ENCODE measurements at regions of chr12 and their contacts with region 1.

Region 1: DNA sequence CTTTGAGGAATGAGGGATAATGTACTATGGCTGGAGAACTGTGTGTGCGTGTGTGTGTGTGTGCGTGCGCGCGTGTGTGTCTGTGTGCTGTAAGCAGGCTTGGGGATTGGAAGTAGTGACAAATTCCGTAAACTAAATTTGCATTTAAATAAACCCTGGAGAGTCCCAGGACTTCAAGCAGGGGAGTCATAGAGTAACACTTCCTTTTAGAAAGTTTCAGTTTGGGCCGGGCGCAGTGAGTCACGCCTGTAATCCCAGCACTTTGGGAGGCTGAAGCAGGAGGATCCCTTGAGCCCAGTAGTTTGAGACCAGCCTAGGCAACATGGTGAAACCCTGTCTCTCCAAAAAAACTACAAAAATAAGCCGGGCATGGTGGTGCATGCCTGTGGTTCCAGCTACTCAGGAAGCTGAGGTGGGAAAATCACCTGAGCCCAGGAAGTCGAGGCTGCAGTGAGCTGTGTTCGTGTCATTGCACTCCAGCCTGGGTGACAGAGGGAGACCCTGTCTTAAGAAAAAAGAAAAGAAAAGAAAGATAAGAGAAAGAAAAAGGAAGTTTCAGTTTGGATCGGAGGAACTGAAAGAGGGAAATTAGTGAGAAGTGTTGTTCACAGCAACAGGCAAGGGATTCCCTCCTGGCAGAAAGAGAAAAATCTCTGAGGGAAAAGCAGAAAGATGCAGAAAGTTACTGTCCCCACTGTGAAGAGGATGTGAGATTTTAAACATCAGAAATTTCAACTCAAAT is 222.7 kb upstream of the SOX5 start:
- DNase-seq: no peak
- ATAC-seq: peak; percentile 10

Region 2: DNA sequence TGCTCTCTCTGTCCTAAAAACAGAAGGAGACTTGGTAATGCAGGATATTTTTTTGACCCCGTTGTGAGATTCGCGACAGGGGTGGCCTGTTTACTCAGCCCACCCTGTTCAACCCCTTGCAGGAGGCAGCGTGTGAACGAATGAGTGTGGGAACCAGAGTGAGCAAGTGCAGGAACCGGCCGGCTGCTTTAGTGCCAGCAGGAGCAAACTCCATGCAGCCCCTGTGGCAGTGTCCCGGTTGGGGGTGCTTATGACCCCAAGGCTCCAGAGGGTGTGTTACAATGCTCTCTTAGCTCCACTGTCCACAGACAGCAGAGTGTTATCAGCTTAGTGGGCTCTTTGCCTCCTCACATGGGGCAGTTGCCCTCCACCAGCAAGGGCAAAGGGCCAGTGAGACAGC is 1322.0 kb before region 1 on chr12:
- intact Hi-C with region 1: loop called (anchors 10 kb)
- DNase-seq: no peak
- ATAC-seq: no peak

Region 3: DNA sequence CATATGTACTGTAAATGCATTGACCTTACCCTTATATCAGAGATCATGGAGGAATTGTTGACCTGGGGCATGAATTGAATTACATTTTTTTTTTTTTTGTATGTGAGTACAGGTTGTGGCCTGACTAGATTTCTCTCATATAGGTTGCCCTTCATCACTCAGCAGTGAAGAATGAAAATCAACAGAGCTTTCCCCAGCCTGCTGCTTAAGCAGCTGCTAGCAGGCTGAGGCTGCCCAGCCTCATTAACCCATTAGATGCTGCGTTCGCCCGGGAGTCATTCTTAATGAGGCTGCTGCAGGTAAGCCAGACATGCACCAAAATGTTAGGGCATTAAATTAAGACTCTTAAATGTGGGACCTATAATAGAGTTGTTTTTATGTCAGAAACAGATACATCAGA is 1311.3 kb before region 1 on chr12:
- intact Hi-C with region 1: no loop called
- DNase-seq: no peak
- ATAC-seq: no peak

Region 4: GRCh38 chr12:24231298-24231697 is 59.1 kb after region 1 on chr12:
- intact Hi-C with region 1: no loop called
- DNase-seq: no peak
- ATAC-seq: no peak

Measured in sciatic nerve (tissue), 2 donors.